ENCODE measurements at regions of chr21 and their contacts with region 1.

Region 1: DNA sequence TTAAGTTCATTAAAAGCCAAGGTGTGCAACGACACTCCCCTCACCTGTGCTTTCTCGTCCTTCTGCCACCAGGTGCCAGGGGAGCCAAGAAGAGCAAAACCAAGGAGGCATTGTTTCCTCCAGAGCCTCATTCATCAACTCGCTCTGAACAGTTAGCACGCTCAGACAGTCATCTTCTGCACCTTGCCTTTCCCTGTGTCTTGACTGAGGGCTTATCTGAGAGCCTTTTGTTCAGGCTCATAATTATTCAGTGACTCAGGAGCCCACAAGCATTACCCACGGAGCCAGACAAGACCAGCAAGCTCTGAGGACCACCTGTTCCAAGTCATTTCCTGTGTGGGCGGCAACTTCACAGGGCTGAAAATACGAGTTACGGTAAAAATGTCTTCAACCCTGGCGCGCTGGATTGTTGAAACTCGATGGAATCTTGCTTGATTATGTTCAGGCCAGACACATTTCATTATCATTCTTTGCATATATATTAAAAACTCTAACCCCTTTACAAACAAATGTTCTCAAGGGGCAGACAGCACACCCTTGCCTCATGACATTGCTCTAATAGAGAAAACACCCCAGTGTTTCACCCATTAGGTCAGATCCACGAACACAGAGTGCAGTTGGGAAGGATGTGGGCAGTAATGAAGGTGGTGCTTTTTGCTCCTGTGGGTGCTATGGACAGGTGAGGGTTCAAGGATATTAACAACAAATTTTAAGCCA is 89.7 kb upstream of the RUNX1 start:
- DNase-seq: peak; percentile 83
- ATAC-seq: peak; percentile 91
- H3K4me3 Mint-ChIP-seq: peak overlapping the region; percentile 65
- H3K27ac Mint-ChIP-seq: peak overlapping the region; percentile 93
- H3K4me1 Mint-ChIP-seq: peaks cover 38% of the 10 kb centered on the region
- H3K27me3 Mint-ChIP-seq: no peaks in the 10 kb centered on the region

Region 2: DNA sequence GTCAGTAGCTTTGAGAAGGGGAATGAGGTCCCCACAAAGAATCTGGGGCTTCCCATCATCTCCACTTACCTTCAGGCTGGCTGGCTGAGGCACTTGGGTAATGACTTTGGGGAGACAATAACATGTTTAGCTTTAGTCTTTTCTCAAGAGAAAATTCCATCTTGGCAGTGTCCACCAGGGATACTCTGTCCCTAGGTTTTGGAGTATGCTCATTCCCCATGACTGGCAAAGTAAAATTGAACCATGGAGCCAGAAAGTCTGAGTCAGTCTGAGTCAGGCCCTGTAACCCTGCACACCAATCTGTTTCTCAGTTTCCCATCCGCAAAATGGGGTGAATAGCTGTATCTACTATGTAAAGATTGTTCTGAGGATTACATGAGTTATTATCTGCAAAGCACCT is 117.9 kb before region 1 on chr21:
- CTCF ChIA-PET with region 1: no interaction called
- POLR2A ChIA-PET with region 1: no interaction called
- intact Hi-C with region 1: no loop called
- DNase-seq: peak; percentile 47
- ATAC-seq: peak; percentile 31
- H3K4me3 Mint-ChIP-seq: no peak overlapping the region
- H3K27ac Mint-ChIP-seq: peak overlapping the region; percentile 78
- H3K4me1 Mint-ChIP-seq: peaks cover 90% of the 10 kb centered on the region
- H3K27me3 Mint-ChIP-seq: no peaks in the 10 kb centered on the region

Region 3: GRCh38 chr21:35150562-35151226 is 11.9 kb after region 1 on chr21:
- CTCF ChIA-PET with region 1: no interaction called
- POLR2A ChIA-PET with region 1: interaction called, 8 read pairs
- intact Hi-C with region 1: loop called (anchors 1 kb)
- DNase-seq: no peak
- ATAC-seq: peak; percentile 72
- H3K4me3 Mint-ChIP-seq: peak overlapping the region; percentile 18
- H3K27ac Mint-ChIP-seq: peak overlapping the region; percentile 90
- H3K4me1 Mint-ChIP-seq: peaks cover 63% of the 10 kb centered on the region
- H3K27me3 Mint-ChIP-seq: no peaks in the 10 kb centered on the region

Region 4: GRCh38 chr21:35217504-35218060 is 78.8 kb after region 1 on chr21:
- CTCF ChIA-PET with region 1: no interaction called
- POLR2A ChIA-PET with region 1: no interaction called
- intact Hi-C with region 1: loop called (anchors 1 to 10 kb)
- DNase-seq: peak; percentile 71
- ATAC-seq: peak; percentile 93
- H3K4me3 Mint-ChIP-seq: no peak overlapping the region
- H3K27ac Mint-ChIP-seq: peak overlapping the region; percentile 85
- H3K4me1 Mint-ChIP-seq: peaks cover 28% of the 10 kb centered on the region
- H3K27me3 Mint-ChIP-seq: no peaks in the 10 kb centered on the region

Region 5: DNA sequence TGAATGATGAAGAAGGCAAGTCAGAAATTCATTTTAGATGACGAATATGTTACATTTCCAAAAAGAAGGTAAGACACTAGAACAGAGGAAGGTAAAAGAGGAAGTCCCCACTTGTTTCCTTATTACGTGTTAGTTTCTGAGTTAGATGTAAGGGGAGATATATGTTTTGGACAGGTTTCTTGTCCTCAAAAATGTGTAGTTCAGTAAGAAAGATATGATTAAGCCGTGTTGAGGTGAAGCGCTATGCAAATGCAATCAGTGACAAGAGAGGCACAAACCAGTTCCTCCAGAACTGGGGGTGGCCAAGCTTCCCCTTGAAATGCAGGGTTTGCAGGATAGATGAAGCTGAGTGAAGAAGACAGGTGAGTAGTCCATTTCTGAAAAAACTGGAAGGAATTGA is 203.6 kb after region 1 on chr21:
- CTCF ChIA-PET with region 1: no interaction called
- POLR2A ChIA-PET with region 1: no interaction called
- intact Hi-C with region 1: loop called (anchors 1 to 5 kb)
- DNase-seq: peak; percentile 55
- ATAC-seq: peak; percentile 78
- H3K4me3 Mint-ChIP-seq: peak overlapping the region; percentile 59
- H3K27ac Mint-ChIP-seq: peak overlapping the region; percentile 94
- H3K4me1 Mint-ChIP-seq: peaks cover 39% of the 10 kb centered on the region
- H3K27me3 Mint-ChIP-seq: peaks cover 1% of the 10 kb centered on the region

Region 6: DNA sequence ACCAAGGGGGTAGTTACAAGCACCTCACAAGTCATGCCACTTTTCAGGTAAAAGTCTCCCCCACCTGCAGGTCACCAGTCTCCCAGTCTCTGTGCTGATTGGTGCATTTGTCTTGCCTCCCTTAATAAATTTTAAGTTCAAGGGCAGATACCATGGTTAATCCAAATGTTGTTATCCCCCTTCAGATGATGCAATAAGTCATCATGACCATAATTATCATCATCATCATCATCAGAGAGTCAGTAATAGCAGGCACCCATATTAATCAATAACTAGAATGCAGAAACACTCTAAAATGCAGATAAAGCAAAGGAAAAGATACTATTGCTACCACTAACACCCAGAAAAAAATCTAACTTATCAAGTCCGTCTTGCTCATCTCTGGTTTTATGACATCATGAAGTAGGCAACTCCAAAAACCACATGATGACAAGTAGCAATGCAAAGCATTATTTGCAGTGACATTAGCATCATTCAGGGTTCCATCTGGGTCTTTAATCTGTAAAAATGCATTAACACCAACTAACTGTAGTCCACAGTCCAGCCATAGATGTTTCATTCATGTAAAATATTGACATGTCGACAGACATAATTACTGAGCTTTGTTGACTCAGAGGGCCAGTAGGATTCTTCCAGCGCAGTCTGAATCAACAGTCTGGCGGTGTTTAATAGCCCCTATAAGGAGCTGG is 402.3 kb after region 1 on chr21:
- CTCF ChIA-PET with region 1: no interaction called
- POLR2A ChIA-PET with region 1: no interaction called
- intact Hi-C with region 1: no loop called
- DNase-seq: no peak
- ATAC-seq: no peak
- H3K4me3 Mint-ChIP-seq: no peak overlapping the region
- H3K27ac Mint-ChIP-seq: no peak overlapping the region
- H3K4me1 Mint-ChIP-seq: peaks cover 2% of the 10 kb centered on the region
- H3K27me3 Mint-ChIP-seq: peaks cover 2% of the 10 kb centered on the region

Region 7: DNA sequence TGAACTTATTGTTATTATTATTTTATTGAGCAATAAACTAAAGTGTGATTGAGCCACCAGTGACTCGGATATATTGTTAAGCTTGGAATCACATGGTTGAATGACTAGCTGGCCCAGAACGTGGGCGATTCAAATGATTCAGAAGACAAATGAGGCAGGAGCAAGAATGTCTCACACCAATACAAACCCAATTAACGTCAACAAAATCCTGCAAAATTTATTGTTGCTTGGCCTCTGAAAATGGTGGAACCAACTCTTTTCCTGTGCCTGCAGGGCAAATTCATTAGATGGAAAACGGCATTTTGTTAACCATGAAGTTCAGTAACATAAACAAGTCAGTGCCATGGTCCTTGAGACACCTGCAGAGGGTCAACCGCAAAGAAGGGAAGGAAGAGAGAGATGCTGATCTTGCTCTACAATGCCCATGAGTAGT is 439.5 kb after region 1 on chr21:
- CTCF ChIA-PET with region 1: no interaction called
- POLR2A ChIA-PET with region 1: no interaction called
- intact Hi-C with region 1: loop called in 1 of 2 experiments (anchors 2 kb)
- DNase-seq: no peak
- ATAC-seq: no peak
- H3K4me3 Mint-ChIP-seq: no peak overlapping the region
- H3K27ac Mint-ChIP-seq: peak overlapping the region; percentile 89
- H3K4me1 Mint-ChIP-seq: peaks cover 27% of the 10 kb centered on the region
- H3K27me3 Mint-ChIP-seq: peaks cover 10% of the 10 kb centered on the region